ENCODE measurements at regions of chr3 and their contacts with region 1.

Region 1: GRCh38 chr3:182967218-182968204 is 12.8 kb downstream of the DCUN1D1 start:
- DNase-seq: no peak
- ATAC-seq: peak; percentile 68
- H3K4me3 ChIP-seq: peak overlapping the region; percentile 53
- H3K27ac ChIP-seq: peak overlapping the region; percentile 75
- H3K4me1 ChIP-seq: peaks cover 27% of the 10 kb centered on the region
- H3K27me3 ChIP-seq: no peaks in the 10 kb centered on the region
- CTCF ChIP-seq: no peak
- EP300 ChIP-seq: no peak
- POLR2A ChIP-seq: no peak
- RAD21 ChIP-seq: no peak

Region 2: DNA sequence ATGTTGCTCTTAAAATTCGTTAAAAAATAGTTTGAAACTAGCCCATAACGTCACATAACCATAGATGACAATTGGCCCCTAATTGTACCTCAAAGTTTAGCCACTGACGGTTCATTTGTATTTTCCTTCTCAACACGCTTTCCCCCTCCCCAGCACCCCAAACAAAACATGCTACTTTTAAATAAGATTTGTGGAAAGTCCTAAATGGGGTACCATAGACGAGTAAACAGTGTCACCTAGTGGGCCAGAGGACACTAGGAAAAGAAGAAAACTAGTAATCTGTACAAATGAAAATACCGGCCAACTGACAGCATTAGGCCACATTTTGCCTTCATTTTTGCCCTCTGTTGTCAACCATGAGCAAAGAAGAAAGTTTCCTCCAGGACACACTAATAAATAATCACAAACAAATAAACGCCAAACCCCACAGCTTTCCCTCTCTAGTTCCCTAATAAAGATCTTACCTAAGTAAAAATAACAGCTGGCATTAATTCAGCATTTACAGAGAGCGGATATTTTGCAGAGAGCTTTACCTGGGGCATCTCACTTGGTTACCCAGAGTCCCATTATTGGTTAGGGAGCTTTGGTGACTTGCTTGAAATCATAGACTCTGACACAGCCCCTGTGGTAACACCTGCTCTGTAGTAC is 349.3 kb before region 1 on chr3:
- CTCF ChIA-PET with region 1: no interaction called
- POLR2A ChIA-PET with region 1: no interaction called
- RAD21 ChIA-PET with region 1: no interaction called
- SMC1A ChIA-PET with region 1: no interaction called
- in situ Hi-C with region 1: no loop called
- intact Hi-C with region 1: no loop called
- DNase-seq: no peak
- ATAC-seq: peak; percentile 76
- H3K4me3 ChIP-seq: no peak overlapping the region
- H3K27ac ChIP-seq: no peak overlapping the region
- H3K4me1 ChIP-seq: no peaks in the 10 kb centered on the region
- H3K27me3 ChIP-seq: no peaks in the 10 kb centered on the region; a peak in 1 of 4 replicates
- CTCF ChIP-seq: peak; percentile 57 to 75 (median 65)
- EP300 ChIP-seq: no peak
- POLR2A ChIP-seq: no peak
- RAD21 ChIP-seq: peak; percentile 89

Region 3: GRCh38 chr3:182925330-182925943 is 42.1 kb before region 1 on chr3:
- CTCF ChIA-PET with region 1: interaction called, 3 read pairs
- POLR2A ChIA-PET with region 1: no interaction called
- RAD21 ChIA-PET with region 1: no interaction called
- SMC1A ChIA-PET with region 1: interaction called, 10 read pairs
- in situ Hi-C with region 1: no loop called
- intact Hi-C with region 1: no loop called
- DNase-seq: peak; percentile 92
- ATAC-seq: peak; percentile 97
- H3K4me3 ChIP-seq: no peak overlapping the region
- H3K27ac ChIP-seq: peak overlapping the region; percentile 14; the same call in 1 of the 2 replicates
- H3K4me1 ChIP-seq: peaks cover 9% of the 10 kb centered on the region; the same call in 1 of the 2 replicates
- H3K27me3 ChIP-seq: no peaks in the 10 kb centered on the region
- CTCF ChIP-seq: no peak
- EP300 ChIP-seq: peak; percentile 39 to 75; a peak in 3 of 4 replicates
- POLR2A ChIP-seq: no peak; the same call in 1 of the 2 replicates
- RAD21 ChIP-seq: no peak

Region 4: DNA sequence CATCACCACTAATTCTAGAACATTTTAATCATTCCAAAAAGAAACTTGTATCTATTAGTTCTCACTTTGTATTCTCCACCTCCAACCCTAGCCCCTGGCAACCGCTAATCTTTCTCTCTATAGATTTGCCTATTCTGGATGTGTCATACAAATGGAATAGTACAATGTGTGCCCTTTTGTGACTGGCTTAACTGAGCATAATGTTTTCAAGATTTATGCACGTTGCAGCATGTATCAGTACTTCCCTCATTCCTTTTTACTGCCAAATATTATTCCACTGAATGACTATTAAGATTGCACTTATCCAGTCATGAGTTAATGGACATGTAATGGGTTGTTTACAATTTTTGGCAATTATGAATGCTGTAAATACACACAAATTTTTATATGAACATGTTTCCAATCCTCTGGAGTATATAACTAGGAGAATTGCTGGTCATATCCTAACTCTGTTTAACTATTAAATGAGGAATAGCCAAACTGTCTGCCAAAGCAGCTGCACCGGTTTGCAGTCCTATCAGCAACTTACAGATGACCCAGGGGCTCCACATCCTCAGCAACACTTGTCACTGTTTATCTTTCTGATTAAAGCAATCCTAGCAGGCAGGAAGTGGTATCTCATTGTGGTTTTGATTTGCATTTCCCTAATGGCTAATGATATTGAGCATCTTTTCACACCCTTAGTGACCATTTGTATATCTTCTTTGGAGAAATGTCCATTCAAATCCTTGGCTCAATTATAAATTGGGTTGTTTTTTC is 30.0 kb before region 1 on chr3:
- CTCF ChIA-PET with region 1: interaction called, 3 read pairs
- POLR2A ChIA-PET with region 1: interaction called, 4 read pairs
- RAD21 ChIA-PET with region 1: no interaction called
- SMC1A ChIA-PET with region 1: interaction called, 10 read pairs
- in situ Hi-C with region 1: no loop called
- intact Hi-C with region 1: no loop called
- DNase-seq: no peak
- ATAC-seq: peak; percentile 94
- H3K4me3 ChIP-seq: no peak overlapping the region
- H3K27ac ChIP-seq: no peak overlapping the region
- H3K4me1 ChIP-seq: peaks cover 6% of the 10 kb centered on the region
- H3K27me3 ChIP-seq: no peaks in the 10 kb centered on the region
- CTCF ChIP-seq: no peak
- EP300 ChIP-seq: no peak
- POLR2A ChIP-seq: no peak
- RAD21 ChIP-seq: no peak

Region 5: GRCh38 chr3:182980204-182981037 is 12.9 kb after region 1 on chr3 and contains the start of gene DCUN1D1:
- CTCF ChIA-PET with region 1: interaction called, 10 read pairs
- POLR2A ChIA-PET with region 1: interaction called, 6 read pairs
- RAD21 ChIA-PET with region 1: interaction called, 4 read pairs
- SMC1A ChIA-PET with region 1: interaction called, 23 read pairs
- in situ Hi-C with region 1: no loop called
- intact Hi-C with region 1: no loop called
- DNase-seq: peak; percentile 19
- ATAC-seq: peak; percentile 91
- H3K4me3 ChIP-seq: peak within 1 kb of the TSS; percentile 85
- H3K27ac ChIP-seq: peak within 1 kb of the TSS; percentile 53
- H3K4me1 ChIP-seq: peaks cover 9% of the 10 kb centered on the region
- H3K27me3 ChIP-seq: no peaks in the 10 kb centered on the region
- CTCF ChIP-seq: no peak
- EP300 ChIP-seq: no peak
- POLR2A ChIP-seq: peak; percentile 84
- RAD21 ChIP-seq: no peak
- polyA plus RNA-seq, gene DCUN1D1: 19.8 to 47.4 TPM

Measured in GM12878 (cell line).